ENCODE measurements at regions of chr7 and their contacts with region 1.

Region 1: GRCh38 chr7:152177681-152178404 is 152.4 kb downstream of the GALNT11 start:
- DNase-seq: no peak
- H3K4me3 ChIP-seq: no peak overlapping the region
- H3K27ac ChIP-seq: no peak overlapping the region
- H3K27me3 ChIP-seq: no peaks in the 10 kb centered on the region
- CTCF ChIP-seq: no peak

Region 2: GRCh38 chr7:151822541-151823181 is 355.2 kb before region 1 on chr7:
- CTCF ChIA-PET with region 1: interaction called, 18 read pairs
- POLR2A ChIA-PET with region 1: no interaction called
- DNase-seq: no peak
- H3K4me3 ChIP-seq: no peak overlapping the region
- H3K27ac ChIP-seq: no peak overlapping the region
- H3K27me3 ChIP-seq: peaks cover 43% of the 10 kb centered on the region
- CTCF ChIP-seq: no peak

Region 3: DNA sequence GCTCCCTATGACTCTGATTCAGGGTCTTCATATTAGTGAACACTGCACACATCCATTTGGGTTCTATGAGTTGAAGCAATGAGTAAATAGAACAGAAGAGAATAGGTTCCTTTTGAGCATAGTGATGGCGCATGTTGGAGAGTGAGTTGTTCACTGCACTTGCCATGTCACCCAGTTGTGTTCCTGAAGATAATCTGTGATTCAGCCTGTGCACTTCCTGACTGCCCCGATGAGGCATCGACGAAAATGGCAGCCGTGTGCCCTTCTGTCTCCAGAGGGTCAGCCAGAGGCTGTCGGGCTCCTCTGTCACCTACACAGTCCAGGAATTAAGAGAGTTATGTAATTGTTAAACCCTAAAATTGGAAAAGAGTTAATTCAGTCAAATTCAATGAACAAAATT is 57.6 kb before region 1 on chr7:
- CTCF ChIA-PET with region 1: interaction called, 10 read pairs
- POLR2A ChIA-PET with region 1: no interaction called
- DNase-seq: no peak
- H3K4me3 ChIP-seq: no peak overlapping the region
- H3K27ac ChIP-seq: no peak overlapping the region
- H3K27me3 ChIP-seq: no peaks in the 10 kb centered on the region
- CTCF ChIP-seq: no peak